Dendritic cell treated with granulocyte-macrophage colony-stimulating factor and Interleukin-4, amounts not matched to agents 40 ng/mL and 50 ng/mL, for 4 days (primary cell): ENCODE measurements at regions of chr6 and their contacts with region 1.

Region 1: GRCh38 chr6:70955441-70956190 is 1.2 kb downstream of the B3GAT2 start:
- H3K4me3 Mint-ChIP-seq: peak overlapping the region; percentile 77
- H3K27ac Mint-ChIP-seq: no peak overlapping the region
- H3K4me1 Mint-ChIP-seq: peaks cover 20% of the 10 kb centered on the region
- H3K27me3 Mint-ChIP-seq: peaks cover 64% of the 10 kb centered on the region

Region 2: GRCh38 chr6:70706491-70707123 is 249.0 kb before region 1 on chr6:
- intact Hi-C with region 1: loop called (anchors 5 kb)
- H3K4me3 Mint-ChIP-seq: no peak overlapping the region
- H3K27ac Mint-ChIP-seq: no peak overlapping the region
- H3K4me1 Mint-ChIP-seq: peaks cover 23% of the 10 kb centered on the region
- H3K27me3 Mint-ChIP-seq: no peaks in the 10 kb centered on the region

Region 3: GRCh38 chr6:71349395-71349794 is 393.8 kb after region 1 on chr6:
- intact Hi-C with region 1: loop called (anchors 5 kb)
- H3K4me3 Mint-ChIP-seq: no peak overlapping the region
- H3K27ac Mint-ChIP-seq: no peak overlapping the region
- H3K4me1 Mint-ChIP-seq: peaks cover 27% of the 10 kb centered on the region
- H3K27me3 Mint-ChIP-seq: peaks cover 2% of the 10 kb centered on the region